PC-9 (cell line): ENCODE measurements at regions of chr18 and their contacts with region 1.

Region 1: DNA sequence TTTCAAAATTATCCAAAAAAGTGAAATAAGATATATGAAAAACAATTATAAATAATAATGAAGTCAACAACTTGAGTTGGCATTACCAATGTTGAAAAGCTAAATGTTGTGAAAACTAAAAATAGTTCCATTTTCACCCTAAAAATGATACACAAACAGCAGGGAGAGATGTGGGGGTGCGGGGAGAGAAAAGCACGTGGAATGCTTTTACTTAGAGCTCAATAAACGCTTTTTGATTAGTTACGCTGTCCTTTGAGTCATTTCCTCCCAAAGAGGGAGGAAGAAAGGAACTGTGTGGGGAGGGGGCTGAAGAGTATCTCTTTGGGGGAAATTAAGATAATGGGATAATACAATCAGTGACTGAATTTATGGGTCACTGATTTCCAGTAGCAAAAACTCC is 29.2 kb downstream of the ZNF521 start:
- DNase-seq: no peak
- H3K4me3 ChIP-seq: no peak overlapping the region
- H3K27ac ChIP-seq: no peak overlapping the region
- H3K4me1 ChIP-seq: no peaks in the 10 kb centered on the region
- H3K27me3 ChIP-seq: no peaks in the 10 kb centered on the region
- CTCF ChIP-seq: no peak

Region 2: GRCh38 chr18:24543805-24544498 is 778.9 kb before region 1 on chr18:
- CTCF ChIA-PET with region 1: no interaction called
- POLR2A ChIA-PET with region 1: interaction called, 38 read pairs
- intact Hi-C with region 1: no loop called
- DNase-seq: no peak
- H3K4me3 ChIP-seq: no peak overlapping the region
- H3K27ac ChIP-seq: no peak overlapping the region
- H3K4me1 ChIP-seq: no peaks in the 10 kb centered on the region
- H3K27me3 ChIP-seq: peaks cover 1% of the 10 kb centered on the region
- CTCF ChIP-seq: peak; percentile 64

Region 3: DNA sequence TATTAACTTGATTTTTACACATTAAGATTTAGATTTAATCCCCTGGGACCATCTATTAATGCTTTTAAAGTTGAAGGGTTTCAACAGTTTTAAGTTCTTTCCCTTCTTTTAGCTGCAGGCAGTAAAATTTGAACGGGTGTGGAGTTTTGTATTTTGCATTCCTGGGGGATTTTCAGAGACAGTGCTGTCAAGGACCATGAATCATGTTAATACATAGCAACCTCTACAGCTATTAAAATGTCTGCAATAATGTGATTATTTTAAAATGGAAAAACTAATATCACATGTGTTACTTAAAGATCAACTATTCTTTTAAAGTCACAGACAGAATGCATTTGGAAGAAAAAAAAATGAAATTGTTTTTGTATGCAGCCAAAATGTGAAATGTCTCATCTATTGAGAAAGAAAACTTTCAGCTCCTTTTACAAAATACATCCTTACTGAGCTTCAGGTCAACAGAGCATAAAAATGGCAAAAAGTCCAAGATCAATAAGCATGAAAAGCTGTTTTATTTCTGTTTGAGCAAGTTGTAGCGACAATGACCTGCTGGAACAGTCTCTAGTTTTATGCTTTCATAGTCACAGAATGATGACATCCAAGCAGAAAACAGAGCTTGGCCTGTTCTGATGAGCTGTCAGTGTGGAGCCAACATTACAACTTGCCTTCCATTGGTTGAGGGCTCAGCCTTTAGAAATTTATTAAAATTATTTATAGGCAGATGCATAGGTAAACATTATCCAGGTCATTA is 50.8 kb after region 1 on chr18:
- CTCF ChIA-PET with region 1: no interaction called
- POLR2A ChIA-PET with region 1: no interaction called
- intact Hi-C with region 1: no loop called
- DNase-seq: no peak
- H3K4me3 ChIP-seq: no peak overlapping the region
- H3K27ac ChIP-seq: no peak overlapping the region
- H3K4me1 ChIP-seq: no peaks in the 10 kb centered on the region
- H3K27me3 ChIP-seq: peaks cover 8% of the 10 kb centered on the region; the same call in 1 of the 2 replicates
- CTCF ChIP-seq: no peak

Region 4: GRCh38 chr18:26832302-26832701 is 1509.5 kb after region 1 on chr18:
- CTCF ChIA-PET with region 1: no interaction called
- POLR2A ChIA-PET with region 1: interaction called, 37 read pairs
- intact Hi-C with region 1: no loop called
- DNase-seq: no peak
- H3K4me3 ChIP-seq: no peak overlapping the region
- H3K27ac ChIP-seq: no peak overlapping the region
- H3K4me1 ChIP-seq: no peaks in the 10 kb centered on the region
- H3K27me3 ChIP-seq: no peaks in the 10 kb centered on the region
- CTCF ChIP-seq: no peak